Activated CD4-positive, alpha-beta T cell treated with anti-CD3 and anti-CD28 coated beads, Interleukin-2, amount 10 ng/mL, durations not matched to agents 7 days and 5 days (primary cell): ENCODE measurements at regions of chr19 and their contacts with region 1.

Region 1: GRCh38 chr19:48795055-48795684 is 15.7 kb downstream of the BCAT2 start:
- DNase-seq: peak; percentile 89
- H3K4me3 Mint-ChIP-seq: peak overlapping the region; percentile 89
- H3K27ac Mint-ChIP-seq: peak overlapping the region; percentile 89
- H3K4me1 Mint-ChIP-seq: peaks cover 12% of the 10 kb centered on the region
- H3K27me3 Mint-ChIP-seq: no peaks in the 10 kb centered on the region

Region 2: DNA sequence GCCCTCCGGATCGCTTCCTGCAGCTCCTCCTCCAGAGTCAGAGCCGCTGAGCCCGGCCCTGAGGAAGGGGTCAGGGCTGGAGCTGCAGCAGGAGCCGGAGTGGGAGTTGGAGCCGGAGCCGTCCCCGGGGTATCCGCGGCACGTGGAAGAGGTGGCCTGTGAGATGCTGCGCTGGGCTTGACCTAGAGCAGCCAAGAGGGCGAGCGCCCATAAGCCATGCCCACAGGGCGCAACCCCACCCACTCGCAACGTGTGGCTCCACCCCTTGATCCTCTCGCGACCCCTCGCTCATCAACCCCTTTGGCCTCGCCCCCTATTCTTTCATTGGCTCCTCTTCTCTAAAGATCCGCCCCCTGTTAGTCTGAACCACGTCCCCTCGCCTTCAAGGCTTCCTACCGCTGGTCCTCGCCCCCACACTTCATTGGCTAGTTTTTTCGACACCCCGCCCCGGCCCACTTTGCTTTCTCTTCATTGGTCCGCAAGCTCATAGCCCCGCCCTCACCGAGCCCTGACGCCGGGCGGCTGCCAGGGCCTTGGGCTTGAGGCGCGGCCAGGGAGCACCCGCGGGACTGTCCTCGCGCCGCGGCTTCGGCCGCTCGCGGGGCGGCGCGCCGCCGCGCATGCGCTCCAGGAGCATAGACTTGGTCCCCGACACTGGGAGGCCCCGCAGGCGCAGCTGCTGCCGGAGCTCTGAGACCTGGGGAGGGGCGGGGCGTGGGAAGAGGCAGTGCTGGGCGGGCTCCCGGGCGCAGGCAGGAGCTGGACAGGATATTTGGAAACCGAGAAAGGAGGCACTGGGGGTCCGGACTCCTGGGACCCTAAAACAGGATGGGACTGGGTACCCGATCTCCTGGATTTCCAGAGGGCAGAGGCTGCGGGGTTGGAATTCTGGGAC is 81.1 kb before region 1 on chr19:
- CTCF ChIA-PET with region 1: no interaction called
- POLR2A ChIA-PET with region 1: no interaction called
- DNase-seq: peak; percentile 99
- H3K4me3 Mint-ChIP-seq: peak overlapping the region; percentile 75
- H3K27ac Mint-ChIP-seq: peak overlapping the region; percentile 92
- H3K4me1 Mint-ChIP-seq: peaks cover 27% of the 10 kb centered on the region
- H3K27me3 Mint-ChIP-seq: no peaks in the 10 kb centered on the region

Region 3: DNA sequence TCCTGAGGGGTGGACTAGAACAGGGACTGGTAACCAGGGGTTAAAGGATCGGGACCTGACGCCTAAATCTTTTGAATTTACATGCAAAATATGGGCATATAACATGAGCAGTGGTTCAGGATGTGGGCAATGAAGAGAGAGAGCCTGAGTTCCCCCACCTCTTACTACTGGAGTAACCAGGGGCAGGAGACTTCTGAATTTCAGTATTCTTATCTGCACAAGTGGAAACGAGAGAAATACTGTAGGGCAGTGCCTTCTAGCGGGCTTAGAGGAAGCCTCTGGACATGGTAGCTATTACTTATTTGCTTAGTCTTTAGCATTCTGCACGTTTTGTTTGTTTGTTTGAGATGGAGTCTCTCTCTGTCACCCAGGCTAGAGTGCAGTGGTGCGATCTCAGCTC is 10.6 kb before region 1 on chr19:
- CTCF ChIA-PET with region 1: interaction called, 10 read pairs
- POLR2A ChIA-PET with region 1: no interaction called
- DNase-seq: no peak
- H3K4me3 Mint-ChIP-seq: no peak overlapping the region
- H3K27ac Mint-ChIP-seq: no peak overlapping the region
- H3K4me1 Mint-ChIP-seq: peaks cover 5% of the 10 kb centered on the region
- H3K27me3 Mint-ChIP-seq: peaks cover 2% of the 10 kb centered on the region

Region 4: GRCh38 chr19:48806518-48806817 is 11.3 kb after region 1 on chr19:
- CTCF ChIA-PET with region 1: interaction called, 34 read pairs
- POLR2A ChIA-PET with region 1: no interaction called
- DNase-seq: peak; percentile 65
- H3K4me3 Mint-ChIP-seq: no peak overlapping the region
- H3K27ac Mint-ChIP-seq: no peak overlapping the region
- H3K4me1 Mint-ChIP-seq: peaks cover 23% of the 10 kb centered on the region
- H3K27me3 Mint-ChIP-seq: no peaks in the 10 kb centered on the region

Region 5: DNA sequence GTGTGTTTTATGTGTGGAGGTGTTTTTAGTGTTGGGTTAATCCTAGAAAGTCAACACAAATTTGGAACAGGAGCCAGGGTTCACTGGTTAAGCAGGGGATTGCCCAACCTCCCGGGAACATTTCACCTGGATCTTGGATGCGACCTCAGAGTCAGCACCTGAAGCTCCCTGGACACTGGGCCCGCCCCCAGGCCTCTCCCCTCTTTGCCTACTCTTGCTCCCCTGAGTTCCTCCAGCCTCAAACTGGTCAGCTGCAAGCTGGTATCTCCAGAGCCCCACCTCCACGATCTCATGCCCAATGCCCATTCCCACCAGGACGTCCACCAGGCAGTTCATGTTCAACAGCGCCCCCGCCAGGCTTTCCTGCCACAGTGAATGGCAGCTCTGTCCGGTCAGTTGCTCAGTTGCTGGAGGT is 31.4 kb after region 1 on chr19:
- CTCF ChIA-PET with region 1: interaction called, 45 read pairs
- POLR2A ChIA-PET with region 1: no interaction called
- DNase-seq: no peak
- H3K4me3 Mint-ChIP-seq: no peak overlapping the region
- H3K27ac Mint-ChIP-seq: no peak overlapping the region
- H3K4me1 Mint-ChIP-seq: no peaks in the 10 kb centered on the region
- H3K27me3 Mint-ChIP-seq: no peaks in the 10 kb centered on the region

Region 6: DNA sequence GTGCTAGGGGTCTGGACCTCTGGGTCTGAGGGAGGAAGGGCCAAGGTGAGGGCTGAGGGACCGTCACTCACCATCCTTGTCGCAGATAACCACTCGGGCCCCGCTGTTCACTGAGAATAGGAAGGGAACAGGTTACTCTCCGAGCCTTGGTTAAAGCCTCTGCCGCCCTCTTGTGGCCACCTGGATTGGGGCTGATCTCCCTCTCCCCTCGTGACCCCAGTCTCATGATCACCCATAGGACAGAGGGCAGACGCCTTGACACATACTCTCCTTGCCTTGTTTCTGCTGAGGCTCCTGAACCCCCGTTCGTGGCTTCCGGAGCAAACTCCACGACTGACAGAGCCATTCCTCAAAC is 40.5 kb after region 1 on chr19:
- CTCF ChIA-PET with region 1: interaction called, 45 read pairs
- POLR2A ChIA-PET with region 1: no interaction called
- DNase-seq: peak; percentile 95
- H3K4me3 Mint-ChIP-seq: peak overlapping the region; percentile 71
- H3K27ac Mint-ChIP-seq: peak overlapping the region; percentile 83
- H3K4me1 Mint-ChIP-seq: peaks cover 25% of the 10 kb centered on the region
- H3K27me3 Mint-ChIP-seq: peaks cover 4% of the 10 kb centered on the region

Region 7: GRCh38 chr19:48842789-48843162 is 47.6 kb after region 1 on chr19:
- CTCF ChIA-PET with region 1: interaction called, 35 read pairs
- POLR2A ChIA-PET with region 1: no interaction called
- DNase-seq: peak; percentile 67
- H3K4me3 Mint-ChIP-seq: no peak overlapping the region
- H3K27ac Mint-ChIP-seq: peak overlapping the region; percentile 48
- H3K4me1 Mint-ChIP-seq: peaks cover 2% of the 10 kb centered on the region
- H3K27me3 Mint-ChIP-seq: no peaks in the 10 kb centered on the region

Region 8: DNA sequence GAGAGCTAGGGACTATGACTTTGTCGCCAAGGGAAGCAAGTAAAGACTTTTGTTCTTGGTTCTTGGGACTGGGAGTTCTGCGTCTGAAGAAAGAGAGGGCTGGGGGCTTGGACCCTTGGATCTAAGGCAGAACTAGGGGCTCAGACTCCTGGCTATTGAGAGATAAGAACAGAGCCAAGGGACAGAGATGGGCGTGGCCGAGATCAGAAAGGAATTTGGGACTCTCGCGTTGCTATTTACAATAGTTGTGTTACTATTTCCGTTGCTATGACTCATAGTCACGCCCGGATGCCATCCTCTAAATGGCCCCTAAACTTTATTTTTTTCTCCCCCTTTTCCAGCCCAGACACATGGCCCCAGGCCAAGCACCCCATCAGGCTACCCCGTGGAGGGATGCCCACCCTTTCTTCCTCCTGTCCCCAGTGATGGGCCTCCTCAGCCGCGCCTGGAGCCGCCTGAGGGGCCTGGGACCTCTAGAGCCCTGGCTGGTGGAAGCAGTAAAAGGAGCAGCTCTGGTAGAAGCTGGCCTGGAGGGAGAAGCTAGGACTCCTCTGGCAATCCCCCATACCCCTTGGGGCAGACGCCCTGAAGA is 77.8 kb after region 1 on chr19:
- CTCF ChIA-PET with region 1: no interaction called
- POLR2A ChIA-PET with region 1: no interaction called
- DNase-seq: peak; percentile 90
- H3K4me3 Mint-ChIP-seq: peak overlapping the region; percentile 98
- H3K27ac Mint-ChIP-seq: peak overlapping the region; percentile 98
- H3K4me1 Mint-ChIP-seq: peaks cover 50% of the 10 kb centered on the region
- H3K27me3 Mint-ChIP-seq: peaks cover 4% of the 10 kb centered on the region

Region 9: DNA sequence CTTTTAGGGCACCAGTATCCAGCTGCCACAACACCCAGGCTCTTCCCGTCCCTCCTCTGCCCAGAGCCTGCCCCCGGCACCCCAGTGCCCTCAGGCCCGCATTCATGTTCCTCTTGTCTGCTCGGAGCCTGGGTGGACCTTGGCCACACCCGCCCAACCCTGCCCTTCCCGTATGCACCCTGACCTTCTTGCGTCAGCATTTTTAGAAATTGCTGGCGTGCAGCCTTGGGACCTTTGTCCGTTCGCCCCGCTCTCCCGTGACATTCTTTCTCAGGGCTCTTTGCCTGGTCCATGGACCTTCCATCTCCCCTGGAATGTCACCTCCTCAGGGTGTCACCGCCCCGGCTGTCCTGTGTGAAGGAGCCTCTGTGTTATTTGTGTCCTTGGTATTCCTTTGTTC is 112.5 kb after region 1 on chr19:
- CTCF ChIA-PET with region 1: no interaction called
- POLR2A ChIA-PET with region 1: no interaction called
- DNase-seq: no peak
- H3K4me3 Mint-ChIP-seq: no peak overlapping the region
- H3K27ac Mint-ChIP-seq: no peak overlapping the region
- H3K4me1 Mint-ChIP-seq: peaks cover 13% of the 10 kb centered on the region
- H3K27me3 Mint-ChIP-seq: no peaks in the 10 kb centered on the region

Region 10: DNA sequence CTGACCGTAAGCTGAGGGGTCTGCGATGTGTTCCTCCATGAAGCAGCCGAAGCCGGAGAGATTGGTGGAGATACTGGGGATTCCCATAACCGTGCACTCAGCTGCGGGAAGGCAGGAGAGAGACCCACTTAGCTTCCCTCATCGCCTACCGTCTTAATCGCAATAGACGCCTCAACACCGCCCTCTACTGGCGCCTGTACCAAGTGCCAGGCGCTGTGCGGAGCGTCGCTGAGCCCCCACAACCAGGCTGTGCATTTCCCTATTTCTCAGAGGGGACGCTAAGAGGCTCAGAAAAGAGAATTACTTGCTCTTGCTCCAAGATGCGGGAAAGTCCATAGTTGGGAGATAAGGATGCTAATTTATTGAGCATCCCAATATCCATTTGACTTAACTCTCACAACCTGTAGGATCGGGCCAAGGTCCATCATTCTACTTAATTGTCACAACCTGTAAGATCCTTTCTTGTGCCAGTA is 175.8 kb after region 1 on chr19:
- CTCF ChIA-PET with region 1: interaction called, 14 read pairs
- POLR2A ChIA-PET with region 1: no interaction called
- DNase-seq: peak; percentile 84
- H3K4me3 Mint-ChIP-seq: no peak overlapping the region
- H3K27ac Mint-ChIP-seq: no peak overlapping the region
- H3K4me1 Mint-ChIP-seq: peaks cover 26% of the 10 kb centered on the region
- H3K27me3 Mint-ChIP-seq: no peaks in the 10 kb centered on the region